GM12878 (cell line): ENCODE measurements at regions of chr20 and their contacts with region 1.

Region 1: GRCh38 chr20:6767536-6768227 is at the start of gene BMP2:
- DNase-seq: no peak
- ATAC-seq: peak; percentile 58
- H3K4me3 ChIP-seq: 0 out of 2 replicates have a peak within 1 kb of the TSS, but pooled peaks have one; percentile 27
- H3K27ac ChIP-seq: no peak within 1 kb of the TSS
- H3K4me1 ChIP-seq: no peaks in the 10 kb centered on the region
- H3K27me3 ChIP-seq: peaks cover 0 to 10% of the 10 kb centered on the region in 2 experiments; a peak in 2 of 4 replicates
- CTCF ChIP-seq: no peak; a peak in 1 of 6 replicates
- EP300 ChIP-seq: no peak
- POLR2A ChIP-seq: no peak
- RAD21 ChIP-seq: no peak
- polyA plus RNA-seq, gene BMP2: 0.57 to 0.74 TPM

Region 2: DNA sequence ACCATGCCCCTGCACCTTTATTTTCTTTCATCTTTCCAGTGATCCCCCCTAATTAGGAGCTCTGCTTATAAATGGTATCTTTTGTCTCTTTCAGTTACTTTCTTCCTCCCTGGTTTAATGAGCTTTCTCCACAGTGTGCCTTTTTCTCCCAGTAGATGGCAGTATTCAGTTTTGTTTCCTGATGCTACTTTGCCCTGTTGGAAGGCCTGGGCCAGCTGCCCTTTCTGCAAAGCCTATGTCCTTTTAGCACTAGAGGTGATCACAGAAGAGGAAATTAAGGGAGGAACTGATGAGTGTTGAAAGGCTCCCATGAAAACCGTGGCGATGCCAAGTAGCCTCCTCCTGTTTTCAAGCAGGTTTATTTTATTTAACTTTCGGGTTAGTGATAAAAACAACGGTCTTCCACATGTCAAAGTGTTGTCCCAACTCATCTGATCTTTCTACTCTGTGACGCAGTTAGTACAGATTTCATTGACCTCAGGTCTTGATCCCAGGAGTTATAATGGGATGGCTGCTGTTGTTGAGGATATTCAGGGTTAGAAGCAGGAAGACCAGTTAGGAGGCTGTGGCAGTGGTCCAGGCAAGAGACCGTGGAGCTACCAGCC is 184.4 kb before region 1 on chr20:
- CTCF ChIA-PET with region 1: interaction called, 44 read pairs
- POLR2A ChIA-PET with region 1: no interaction called
- RAD21 ChIA-PET with region 1: interaction called, 19 read pairs
- SMC1A ChIA-PET with region 1: interaction called, 30 read pairs
- in situ Hi-C with region 1: no loop called
- intact Hi-C with region 1: loop called (anchors 1 kb)
- DNase-seq: peak; percentile 25
- ATAC-seq: peak; percentile 96
- H3K4me3 ChIP-seq: no peak overlapping the region
- H3K27ac ChIP-seq: no peak overlapping the region
- H3K4me1 ChIP-seq: no peaks in the 10 kb centered on the region
- H3K27me3 ChIP-seq: no peaks in the 10 kb centered on the region
- CTCF ChIP-seq: peak; percentile 58 to 81 (median 63)
- EP300 ChIP-seq: no peak
- POLR2A ChIP-seq: no peak
- RAD21 ChIP-seq: peak; percentile 63

Region 3: DNA sequence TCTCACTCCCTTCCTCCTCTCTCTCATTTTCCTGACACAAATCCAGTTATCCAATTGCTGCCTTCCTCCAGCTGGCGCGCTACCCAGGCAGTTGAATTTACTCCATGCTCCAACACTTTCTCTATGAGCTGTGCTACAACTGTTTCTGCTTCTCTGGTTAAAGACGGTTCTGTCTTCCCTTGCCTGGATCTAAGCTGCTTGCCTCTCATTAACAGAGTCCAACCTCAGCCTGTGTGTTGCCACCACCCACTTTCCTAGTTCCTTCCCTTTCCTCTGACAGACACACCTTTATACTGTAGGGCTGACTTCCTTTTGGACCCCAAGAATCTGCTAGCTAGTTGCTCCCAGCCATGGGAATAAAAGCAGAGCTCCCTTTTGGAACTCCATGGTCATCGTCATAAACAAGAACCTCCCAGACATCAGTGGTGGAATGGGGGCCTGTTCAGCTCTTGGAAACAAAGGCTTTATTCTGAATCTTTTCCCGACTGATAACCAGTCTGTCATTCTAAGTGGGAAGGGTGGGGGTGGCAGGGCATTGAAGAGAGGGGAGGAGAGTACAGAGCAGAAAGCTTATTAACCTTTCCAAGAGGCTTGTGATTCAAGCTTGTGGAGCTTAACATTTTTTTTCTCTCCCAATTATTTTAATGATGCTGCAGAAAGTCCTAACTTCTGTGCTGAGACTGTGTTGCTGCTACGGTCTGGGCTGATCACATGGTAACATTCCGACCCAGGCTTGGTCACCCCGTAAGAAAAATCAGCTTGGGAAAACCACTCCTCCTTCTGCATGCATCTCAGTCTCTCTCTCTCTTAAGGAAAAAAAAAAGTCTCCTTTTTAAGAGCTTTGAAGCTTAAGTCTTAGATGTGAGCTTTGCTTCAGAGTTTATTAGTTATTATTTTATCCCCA is 31.5 kb before region 1 on chr20:
- CTCF ChIA-PET with region 1: interaction called, 3 read pairs
- POLR2A ChIA-PET with region 1: no interaction called
- RAD21 ChIA-PET with region 1: interaction called, 4 read pairs
- SMC1A ChIA-PET with region 1: interaction called, 12 read pairs
- in situ Hi-C with region 1: no loop called
- intact Hi-C with region 1: no loop called
- DNase-seq: no peak
- ATAC-seq: peak; percentile 52
- H3K4me3 ChIP-seq: no peak overlapping the region
- H3K27ac ChIP-seq: no peak overlapping the region
- H3K4me1 ChIP-seq: no peaks in the 10 kb centered on the region
- H3K27me3 ChIP-seq: no peaks in the 10 kb centered on the region; a peak in 1 of 4 replicates
- CTCF ChIP-seq: no peak
- EP300 ChIP-seq: no peak
- POLR2A ChIP-seq: no peak
- RAD21 ChIP-seq: no peak

Region 4: GRCh38 chr20:6784210-6784611 is 16.5 kb after region 1 on chr20:
- CTCF ChIA-PET with region 1: interaction called, 20 read pairs
- POLR2A ChIA-PET with region 1: interaction called, 9 read pairs
- RAD21 ChIA-PET with region 1: interaction called, 6 read pairs
- SMC1A ChIA-PET with region 1: interaction called, 8 read pairs
- in situ Hi-C with region 1: no loop called
- intact Hi-C with region 1: no loop called
- DNase-seq: no peak
- ATAC-seq: peak; percentile 47
- H3K4me3 ChIP-seq: no peak overlapping the region
- H3K27ac ChIP-seq: no peak overlapping the region
- H3K4me1 ChIP-seq: no peaks in the 10 kb centered on the region
- H3K27me3 ChIP-seq: no peaks in the 10 kb centered on the region
- CTCF ChIP-seq: no peak
- EP300 ChIP-seq: no peak
- POLR2A ChIP-seq: no peak
- RAD21 ChIP-seq: no peak

Region 5: DNA sequence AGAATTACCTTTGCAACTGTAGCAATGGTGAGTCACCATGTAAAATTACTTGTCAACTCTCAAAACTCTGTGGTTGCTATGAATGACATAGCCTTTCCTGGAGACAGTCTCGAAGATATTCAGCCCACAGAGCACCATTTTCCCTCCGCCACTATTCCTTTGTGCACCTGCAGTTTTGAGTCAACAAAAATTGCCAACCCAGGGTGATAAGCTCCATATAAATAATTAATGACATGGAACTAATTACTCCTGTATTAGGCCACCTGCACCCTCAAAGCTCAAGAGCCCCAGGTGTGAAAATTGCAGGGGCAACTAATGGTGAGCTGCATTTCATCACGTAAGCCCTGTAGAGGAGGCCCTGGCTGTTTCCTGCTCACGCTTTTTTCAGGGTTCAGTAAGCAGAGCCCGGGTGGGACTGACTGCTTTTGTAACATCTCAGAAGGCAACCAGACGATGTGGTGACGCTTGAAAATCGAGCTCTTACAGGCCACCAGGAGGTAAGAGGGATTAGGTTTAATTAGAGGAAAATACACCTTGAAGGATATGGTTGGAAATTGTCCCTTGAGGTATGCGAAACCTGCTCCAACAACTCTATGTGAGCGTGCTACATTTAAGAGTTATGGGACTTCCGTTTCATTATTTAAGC is 70.6 kb after region 1 on chr20:
- CTCF ChIA-PET with region 1: interaction called, 6 read pairs
- POLR2A ChIA-PET with region 1: interaction called, 4 read pairs
- RAD21 ChIA-PET with region 1: interaction called, 8 read pairs
- SMC1A ChIA-PET with region 1: interaction called, 23 read pairs
- in situ Hi-C with region 1: no loop called
- intact Hi-C with region 1: no loop called
- DNase-seq: peak; percentile 25
- ATAC-seq: peak; percentile 84
- H3K4me3 ChIP-seq: no peak overlapping the region
- H3K27ac ChIP-seq: no peak overlapping the region
- H3K4me1 ChIP-seq: no peaks in the 10 kb centered on the region
- H3K27me3 ChIP-seq: no peaks in the 10 kb centered on the region
- CTCF ChIP-seq: no peak
- EP300 ChIP-seq: peak; percentile 18 to 60; a peak in 2 of 4 replicates
- POLR2A ChIP-seq: no peak
- RAD21 ChIP-seq: no peak

Region 6: DNA sequence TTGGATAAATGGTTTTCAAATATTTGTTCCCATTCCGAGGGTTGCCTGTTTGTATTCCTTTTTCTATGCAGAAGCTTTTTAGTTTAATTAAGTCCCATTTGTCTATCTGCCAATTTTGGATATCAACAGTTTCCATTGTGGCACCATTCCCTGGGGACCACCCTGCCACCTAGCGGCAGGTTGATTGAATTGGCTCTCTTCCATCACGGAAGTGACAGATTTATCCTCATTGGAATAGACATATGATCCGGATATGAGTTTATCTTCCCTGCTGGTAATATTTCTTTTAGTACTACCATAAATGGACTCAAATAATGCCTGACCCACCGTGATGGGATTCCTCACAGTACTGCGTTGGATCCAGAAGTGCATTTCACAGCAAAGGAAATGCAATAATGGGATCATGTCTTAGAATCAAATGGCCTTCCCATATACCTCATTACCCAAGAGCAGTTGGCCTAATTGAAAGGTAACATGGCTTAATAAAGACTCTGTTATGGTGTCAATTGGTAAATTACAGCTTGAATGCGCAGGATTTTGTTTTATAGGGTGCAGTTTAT is 326.8 kb after region 1 on chr20:
- CTCF ChIA-PET with region 1: interaction called, 6 read pairs
- POLR2A ChIA-PET with region 1: interaction called, 4 read pairs
- RAD21 ChIA-PET with region 1: interaction called, 4 read pairs
- SMC1A ChIA-PET with region 1: interaction called, 5 read pairs
- in situ Hi-C with region 1: no loop called
- intact Hi-C with region 1: loop called (anchors 10 kb)
- DNase-seq: no peak
- ATAC-seq: peak; percentile 43; the same call in 1 of the 3 replicates
- H3K4me3 ChIP-seq: no peak overlapping the region
- H3K27ac ChIP-seq: no peak overlapping the region
- H3K4me1 ChIP-seq: no peaks in the 10 kb centered on the region
- H3K27me3 ChIP-seq: no peaks in the 10 kb centered on the region
- CTCF ChIP-seq: peak; percentile 45 to 75 (median 62)
- EP300 ChIP-seq: no peak
- POLR2A ChIP-seq: no peak
- RAD21 ChIP-seq: peak; percentile 43

Region 7: GRCh38 chr20:7375905-7376304 is 608.2 kb after region 1 on chr20:
- CTCF ChIA-PET with region 1: interaction called, 25 read pairs
- POLR2A ChIA-PET with region 1: no interaction called
- RAD21 ChIA-PET with region 1: no interaction called
- SMC1A ChIA-PET with region 1: interaction called, 9 read pairs
- in situ Hi-C with region 1: loop called (anchors 10 kb)
- intact Hi-C with region 1: no loop called
- DNase-seq: no peak
- ATAC-seq: no peak
- H3K4me3 ChIP-seq: no peak overlapping the region
- H3K27ac ChIP-seq: no peak overlapping the region
- H3K4me1 ChIP-seq: no peaks in the 10 kb centered on the region
- H3K27me3 ChIP-seq: no peaks in the 10 kb centered on the region
- CTCF ChIP-seq: peak; percentile 22 to 39 (median 33); a peak in 3 of 6 replicates
- EP300 ChIP-seq: no peak
- POLR2A ChIP-seq: no peak
- RAD21 ChIP-seq: peak; percentile 39; the same call in 1 of the 2 replicates